ENCODE measurements at regions of chr1 and their contacts with region 1.

Region 1: GRCh38 chr1:157369808-157370521 is 182.3 kb downstream of the FCRL5 start:
- DNase-seq: peak; percentile 51
- H3K4me3 ChIP-seq: peak overlapping the region in 1 of 2 experiments; percentile 34; a peak in 1 of 4 replicates
- H3K27ac ChIP-seq: no peak overlapping the region
- H3K4me1 ChIP-seq: no peaks in the 10 kb centered on the region
- H3K27me3 ChIP-seq: peaks cover 9% of the 10 kb centered on the region; the same call in 1 of the 2 replicates
- CTCF ChIP-seq: peak; percentile 89
- EP300 ChIP-seq: no peak
- RAD21 ChIP-seq: peak; percentile 64

Region 2: DNA sequence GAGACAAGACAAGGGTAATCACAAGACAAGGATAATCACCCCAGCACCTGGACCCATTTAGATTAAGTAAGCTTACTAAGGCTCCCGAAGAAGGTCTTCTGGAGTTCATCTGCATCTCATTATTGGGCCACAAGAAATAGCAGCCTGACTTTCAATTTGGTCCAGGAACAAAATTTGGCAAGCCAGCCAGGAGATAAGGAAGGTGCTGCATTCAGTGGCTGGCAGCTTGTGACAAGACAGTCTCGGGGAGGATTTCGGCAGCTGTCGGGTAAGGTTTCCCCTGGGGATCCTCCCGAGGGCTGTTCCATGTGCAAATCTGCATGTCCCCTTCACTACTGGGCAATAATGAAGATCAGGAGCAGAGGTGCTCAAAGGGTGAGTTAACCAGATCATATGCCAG is 12.9 kb before region 1 on chr1:
- CTCF ChIA-PET with region 1: interaction called, 17 read pairs
- POLR2A ChIA-PET with region 1: no interaction called
- DNase-seq: no peak
- H3K4me3 ChIP-seq: no peak overlapping the region
- H3K27ac ChIP-seq: no peak overlapping the region
- H3K4me1 ChIP-seq: no peaks in the 10 kb centered on the region
- H3K27me3 ChIP-seq: peaks cover 23% of the 10 kb centered on the region
- CTCF ChIP-seq: no peak
- EP300 ChIP-seq: no peak
- RAD21 ChIP-seq: no peak

Region 3: DNA sequence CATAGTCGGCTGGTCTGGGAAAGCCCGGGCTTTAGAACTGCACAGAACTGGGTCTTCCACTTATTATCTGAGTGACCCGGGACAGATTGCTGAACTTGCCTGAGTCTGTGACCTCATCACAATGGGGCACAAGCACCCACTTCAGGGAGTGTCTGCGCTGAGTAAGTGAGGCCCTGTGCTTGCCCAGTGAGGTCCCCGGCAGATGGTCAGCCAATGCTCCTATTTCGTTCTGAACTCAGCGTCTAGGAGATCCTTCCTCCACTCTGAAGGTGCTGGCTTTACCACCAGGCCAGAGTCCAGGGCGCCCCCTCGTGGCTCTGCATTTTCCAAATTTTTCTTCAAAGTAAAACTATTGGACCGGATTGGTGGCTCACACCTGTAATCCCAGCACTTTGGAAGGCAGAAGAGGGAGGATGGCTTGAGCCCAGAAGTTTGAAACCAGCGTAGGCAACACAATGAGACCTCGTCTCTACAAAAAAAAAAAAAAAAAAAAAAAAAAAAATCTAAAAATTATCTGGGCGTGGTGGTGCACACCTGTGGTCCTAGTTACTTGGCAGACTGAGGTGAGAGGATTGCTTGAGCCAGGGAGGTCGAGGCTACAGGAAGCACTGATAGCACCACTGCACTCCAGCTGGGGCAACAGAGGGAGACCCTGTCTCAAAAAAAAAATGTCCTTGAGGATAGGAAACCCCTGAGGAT is 120.7 kb after region 1 on chr1:
- CTCF ChIA-PET with region 1: interaction called, 18 read pairs
- POLR2A ChIA-PET with region 1: no interaction called
- DNase-seq: peak; percentile 25
- H3K4me3 ChIP-seq: no peak overlapping the region; a peak in 1 of 4 replicates
- H3K27ac ChIP-seq: no peak overlapping the region
- H3K4me1 ChIP-seq: no peaks in the 10 kb centered on the region
- H3K27me3 ChIP-seq: 0 out of 2 replicates have a peak, but pooled peaks cover 25% of the 10 kb centered on the region
- CTCF ChIP-seq: peak; percentile 69
- EP300 ChIP-seq: no peak
- RAD21 ChIP-seq: peak; percentile 53

Region 4: DNA sequence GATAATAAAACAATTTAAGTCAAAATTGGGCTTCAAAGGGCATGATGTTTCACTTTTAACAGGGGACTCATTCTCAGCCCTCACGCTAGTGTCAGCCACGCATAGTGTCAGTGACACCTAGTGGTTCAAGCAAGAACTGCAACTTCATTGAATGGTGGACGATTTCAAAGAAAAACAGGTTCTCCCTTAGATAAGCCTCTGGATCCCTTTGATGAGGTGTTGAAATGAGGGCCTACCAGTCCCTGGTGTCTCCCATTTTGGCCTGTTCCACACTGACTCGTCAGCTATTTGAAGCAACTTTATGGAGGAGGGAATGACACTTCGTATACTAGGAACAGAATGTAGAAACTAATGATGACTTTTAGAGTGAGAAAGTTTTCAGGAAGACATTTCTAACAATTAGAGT is 126.2 kb after region 1 on chr1:
- CTCF ChIA-PET with region 1: interaction called, 18 read pairs
- POLR2A ChIA-PET with region 1: no interaction called
- DNase-seq: peak; percentile 42
- H3K4me3 ChIP-seq: no peak overlapping the region
- H3K27ac ChIP-seq: no peak overlapping the region
- H3K4me1 ChIP-seq: no peaks in the 10 kb centered on the region
- H3K27me3 ChIP-seq: peaks cover 16% of the 10 kb centered on the region; the same call in 1 of the 2 replicates
- CTCF ChIP-seq: peak; percentile 80
- EP300 ChIP-seq: no peak
- RAD21 ChIP-seq: peak; percentile 60

Region 5: GRCh38 chr1:157540852-157541251 is 170.9 kb after region 1 on chr1:
- CTCF ChIA-PET with region 1: no interaction called
- POLR2A ChIA-PET with region 1: no interaction called
- DNase-seq: no peak
- H3K4me3 ChIP-seq: no peak overlapping the region
- H3K27ac ChIP-seq: no peak overlapping the region
- H3K4me1 ChIP-seq: no peaks in the 10 kb centered on the region
- H3K27me3 ChIP-seq: peaks cover 13% of the 10 kb centered on the region; the same call in 1 of the 2 replicates
- CTCF ChIP-seq: no peak
- EP300 ChIP-seq: no peak
- RAD21 ChIP-seq: no peak

Measured in SK-N-SH (cell line).